ENCODE measurements at regions of chr12 and their contacts with region 1.

Region 1: GRCh38 chr12:14024591-14024990 is 43.2 kb upstream of the GRIN2B start:
- H3K4me3 ChIP-seq: no peak overlapping the region
- H3K27ac ChIP-seq: no peak overlapping the region
- H3K4me1 ChIP-seq: no peaks in the 10 kb centered on the region
- CTCF ChIP-seq: no peak

Region 2: GRCh38 chr12:13981990-13982389 is 42.6 kb before region 1 on chr12:
- CTCF ChIA-PET with region 1: interaction called, 10 read pairs
- POLR2A ChIA-PET with region 1: no interaction called
- H3K4me3 ChIP-seq: peak overlapping the region; percentile 41
- H3K27ac ChIP-seq: no peak overlapping the region
- H3K4me1 ChIP-seq: no peaks in the 10 kb centered on the region
- CTCF ChIP-seq: no peak

Region 3: GRCh38 chr12:14048941-14049545 is 24.5 kb after region 1 on chr12:
- CTCF ChIA-PET with region 1: no interaction called
- POLR2A ChIA-PET with region 1: no interaction called
- H3K4me3 ChIP-seq: no peak overlapping the region
- H3K27ac ChIP-seq: no peak overlapping the region
- H3K4me1 ChIP-seq: no peaks in the 10 kb centered on the region
- CTCF ChIP-seq: no peak